Activated CD4-positive, alpha-beta T cell treated with anti-CD3 and anti-CD28 coated beads for 36 hours (primary cell): ENCODE measurements at regions of chr1 and their contacts with region 1.

Region 1: DNA sequence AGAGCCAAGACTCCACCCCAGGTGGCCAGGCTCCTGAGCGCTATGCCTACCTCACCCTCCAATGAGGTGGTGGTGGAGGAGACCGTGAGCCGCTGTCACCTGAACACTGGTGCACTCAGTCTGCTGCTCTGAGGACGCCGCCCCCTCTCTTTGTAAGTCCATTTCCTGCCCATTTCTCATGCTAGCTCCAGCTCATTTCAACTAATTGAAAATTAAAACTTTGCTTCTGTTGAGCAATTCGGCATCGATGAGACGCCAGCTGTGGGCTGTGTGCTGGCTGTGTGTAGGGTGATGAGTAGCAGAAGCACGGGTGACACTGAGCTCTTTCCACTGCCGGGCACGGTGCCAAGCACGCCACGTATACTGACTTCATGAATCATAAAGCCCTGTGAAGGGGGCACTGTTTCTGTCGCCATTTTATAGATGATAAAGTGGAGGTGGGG is 11.2 kb downstream of the TNFRSF1B start:
- DNase-seq: peak; percentile 97
- ATAC-seq: peak; percentile 78
- H3K4me3 Mint-ChIP-seq: peak overlapping the region; percentile 63
- H3K27ac Mint-ChIP-seq: peak overlapping the region; percentile 96
- H3K4me1 Mint-ChIP-seq: peaks cover 86% of the 10 kb centered on the region
- H3K27me3 Mint-ChIP-seq: no peaks in the 10 kb centered on the region

Region 2: GRCh38 chr1:10867138-10867721 is 1310.8 kb before region 1 on chr1:
- CTCF ChIA-PET with region 1: no interaction called
- POLR2A ChIA-PET with region 1: no interaction called
- intact Hi-C with region 1: no loop called
- DNase-seq: peak; percentile 77
- ATAC-seq: peak; percentile 84
- H3K4me3 Mint-ChIP-seq: peak overlapping the region; percentile 43
- H3K27ac Mint-ChIP-seq: no peak overlapping the region
- H3K4me1 Mint-ChIP-seq: peaks cover 12% of the 10 kb centered on the region
- H3K27me3 Mint-ChIP-seq: peaks cover 51% of the 10 kb centered on the region

Region 3: GRCh38 chr1:11868331-11868955 is 309.6 kb before region 1 on chr1:
- CTCF ChIA-PET with region 1: no interaction called
- POLR2A ChIA-PET with region 1: no interaction called
- intact Hi-C with region 1: no loop called
- DNase-seq: no peak
- ATAC-seq: no peak
- H3K4me3 Mint-ChIP-seq: no peak overlapping the region
- H3K27ac Mint-ChIP-seq: no peak overlapping the region
- H3K4me1 Mint-ChIP-seq: no peaks in the 10 kb centered on the region
- H3K27me3 Mint-ChIP-seq: peaks cover 3% of the 10 kb centered on the region

Region 4: GRCh38 chr1:11979851-11980675 is 198.0 kb before region 1 on chr1 and contains the start of gene MFN2:
- CTCF ChIA-PET with region 1: interaction called, 3 read pairs
- POLR2A ChIA-PET with region 1: no interaction called
- intact Hi-C with region 1: loop called in 1 of 2 experiments (anchors 1 kb)
- DNase-seq: peak; percentile 96
- ATAC-seq: peak; percentile 93
- H3K4me3 Mint-ChIP-seq: peak within 1 kb of the TSS; percentile 97
- H3K27ac Mint-ChIP-seq: peak within 1 kb of the TSS; percentile 94
- H3K4me1 Mint-ChIP-seq: peaks cover 36% of the 10 kb centered on the region
- H3K27me3 Mint-ChIP-seq: no peaks in the 10 kb centered on the region
- total RNA-seq, gene MFN2: 52.5 to 71.6 TPM

Region 5: DNA sequence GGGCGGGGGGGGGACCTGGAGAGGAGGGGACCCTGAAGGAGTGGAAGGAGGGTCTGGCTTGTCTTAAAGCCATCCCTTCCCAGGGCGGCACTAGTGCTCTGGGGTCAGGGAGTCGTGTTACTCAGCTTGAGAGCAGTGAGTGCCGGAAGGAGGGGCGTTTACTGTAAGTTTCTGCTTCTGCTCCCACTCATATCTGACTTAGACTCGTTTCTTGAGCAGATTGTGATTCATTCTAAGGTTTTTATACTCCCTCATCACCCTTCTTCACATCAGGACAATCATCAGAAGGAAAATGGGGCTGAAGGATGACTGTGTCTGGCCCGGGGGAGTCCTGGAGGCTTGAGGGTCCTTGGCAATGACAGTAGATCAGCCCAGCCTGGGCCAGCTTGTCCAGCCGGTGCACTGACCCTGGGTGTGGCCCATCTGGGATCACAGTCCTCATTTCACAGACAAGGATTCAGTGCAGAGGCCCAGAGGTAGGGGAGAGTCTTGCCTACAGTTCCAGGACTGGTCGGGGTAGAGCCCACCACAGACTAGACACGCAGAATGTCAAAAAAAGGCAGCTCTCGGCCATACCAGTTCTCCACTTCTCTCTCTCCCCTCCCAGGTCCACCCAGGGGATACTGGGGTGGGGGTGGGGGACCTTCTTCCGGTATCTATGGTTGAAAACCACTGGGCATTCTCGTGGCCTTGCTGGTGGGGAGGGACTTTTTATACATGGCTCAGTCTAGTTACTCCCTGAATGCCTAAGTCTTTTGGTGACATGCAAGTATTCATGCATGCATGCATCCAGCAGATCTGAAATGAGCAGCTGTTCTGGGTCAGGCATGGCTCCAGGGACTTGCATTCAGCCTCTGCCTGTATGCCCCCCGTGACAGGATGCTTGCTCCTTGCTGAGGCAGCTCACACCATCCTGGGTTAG is 109.9 kb before region 1 on chr1:
- CTCF ChIA-PET with region 1: no interaction called
- POLR2A ChIA-PET with region 1: no interaction called
- intact Hi-C with region 1: loop called (anchors 1 to 5 kb)
- DNase-seq: peak; percentile 87
- ATAC-seq: peak; percentile 80
- H3K4me3 Mint-ChIP-seq: peak overlapping the region; percentile 62
- H3K27ac Mint-ChIP-seq: peak overlapping the region; percentile 95
- H3K4me1 Mint-ChIP-seq: peaks cover 57% of the 10 kb centered on the region
- H3K27me3 Mint-ChIP-seq: peaks cover 35% of the 10 kb centered on the region

Region 6: DNA sequence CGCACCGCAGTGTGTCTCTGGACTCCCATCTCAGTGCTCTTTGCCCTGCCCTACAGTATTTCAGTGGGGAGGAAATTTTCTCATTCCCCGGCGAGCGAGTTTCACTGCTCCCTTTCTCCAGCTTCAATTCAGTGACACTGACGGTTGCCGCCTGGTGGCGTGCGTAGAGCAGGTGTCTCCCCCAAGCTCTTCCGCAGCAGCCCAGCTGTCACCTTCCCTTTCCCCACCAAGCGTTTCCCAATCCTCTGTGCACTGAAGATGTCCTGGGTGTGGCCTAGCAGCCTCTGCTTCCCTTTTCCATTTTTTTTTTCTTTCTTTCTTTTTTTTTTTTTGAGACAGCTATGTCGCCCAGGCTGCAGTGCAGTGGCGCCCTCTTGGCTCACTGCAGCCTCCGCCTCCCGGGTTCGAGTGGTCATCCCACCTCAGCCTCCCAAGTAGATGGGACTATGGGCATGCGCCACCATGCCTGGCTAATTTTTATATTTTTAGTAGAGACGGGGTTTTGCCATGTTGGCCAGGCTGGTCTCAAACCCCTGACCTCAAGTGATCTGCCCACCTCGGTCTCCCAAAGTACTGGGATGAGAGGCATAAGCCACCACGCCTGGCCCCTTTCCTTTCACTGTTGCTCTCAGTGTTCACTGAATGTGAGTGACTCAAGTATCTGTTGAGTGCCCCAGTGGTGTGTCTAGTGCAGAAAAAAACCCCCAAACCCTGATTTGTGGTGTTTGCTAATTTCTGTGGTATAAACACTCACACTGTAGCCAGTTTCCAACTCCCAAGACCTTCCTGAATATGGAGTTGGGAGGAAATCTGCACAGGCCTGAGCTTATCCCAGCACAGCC is 18.8 kb after region 1 on chr1:
- CTCF ChIA-PET with region 1: no interaction called
- POLR2A ChIA-PET with region 1: interaction called, 4 read pairs
- intact Hi-C with region 1: loop called in 1 of 2 experiments (anchors 1 kb)
- DNase-seq: no peak
- ATAC-seq: no peak
- H3K4me3 Mint-ChIP-seq: no peak overlapping the region
- H3K27ac Mint-ChIP-seq: peak overlapping the region; percentile 42
- H3K4me1 Mint-ChIP-seq: peaks cover 18% of the 10 kb centered on the region
- H3K27me3 Mint-ChIP-seq: no peaks in the 10 kb centered on the region

Region 7: DNA sequence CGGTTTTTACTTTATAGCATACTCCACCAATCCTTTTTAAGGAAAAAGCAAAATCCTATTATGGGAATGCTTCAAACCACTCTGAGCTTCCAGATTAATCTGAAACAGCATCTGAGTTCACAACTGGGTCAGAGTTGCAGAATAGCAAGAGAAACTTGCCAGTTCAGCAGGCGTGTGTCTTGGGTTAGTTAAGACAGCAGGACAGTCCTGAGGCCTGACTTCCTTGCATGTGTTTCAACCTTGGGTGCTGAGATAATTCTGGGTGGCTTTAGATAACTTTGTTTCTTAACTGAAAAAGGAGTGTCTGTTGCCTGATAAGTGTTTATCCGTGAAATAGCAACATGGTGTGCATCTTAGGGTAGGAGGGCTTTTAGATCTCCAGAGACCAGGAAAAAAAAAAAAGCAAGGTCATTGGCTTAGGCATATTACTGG is 270.7 kb after region 1 on chr1:
- CTCF ChIA-PET with region 1: no interaction called
- POLR2A ChIA-PET with region 1: no interaction called
- intact Hi-C with region 1: loop called in 1 of 2 experiments (anchors 1 kb)
- DNase-seq: no peak
- ATAC-seq: no peak
- H3K4me3 Mint-ChIP-seq: peak overlapping the region; percentile 24
- H3K27ac Mint-ChIP-seq: peak overlapping the region; percentile 76
- H3K4me1 Mint-ChIP-seq: peaks cover 69% of the 10 kb centered on the region
- H3K27me3 Mint-ChIP-seq: peaks cover 10% of the 10 kb centered on the region